PC-9 (cell line): ENCODE measurements at regions of chr7 and their contacts with region 1.

Region 1: GRCh38 chr7:4681886-4682620 is at the start of gene FOXK1:
- DNase-seq: peak in 1 of 2 experiments; percentile 84
- H3K4me3 ChIP-seq: peak within 1 kb of the TSS; percentile 66
- H3K27ac ChIP-seq: peak within 1 kb of the TSS; percentile 85
- H3K4me1 ChIP-seq: peaks cover 21% of the 10 kb centered on the region
- H3K27me3 ChIP-seq: no peaks in the 10 kb centered on the region
- CTCF ChIP-seq: no peak
- total RNA-seq, gene FOXK1: 68.1 and 77.3 TPM in 2 replicates

Region 2: DNA sequence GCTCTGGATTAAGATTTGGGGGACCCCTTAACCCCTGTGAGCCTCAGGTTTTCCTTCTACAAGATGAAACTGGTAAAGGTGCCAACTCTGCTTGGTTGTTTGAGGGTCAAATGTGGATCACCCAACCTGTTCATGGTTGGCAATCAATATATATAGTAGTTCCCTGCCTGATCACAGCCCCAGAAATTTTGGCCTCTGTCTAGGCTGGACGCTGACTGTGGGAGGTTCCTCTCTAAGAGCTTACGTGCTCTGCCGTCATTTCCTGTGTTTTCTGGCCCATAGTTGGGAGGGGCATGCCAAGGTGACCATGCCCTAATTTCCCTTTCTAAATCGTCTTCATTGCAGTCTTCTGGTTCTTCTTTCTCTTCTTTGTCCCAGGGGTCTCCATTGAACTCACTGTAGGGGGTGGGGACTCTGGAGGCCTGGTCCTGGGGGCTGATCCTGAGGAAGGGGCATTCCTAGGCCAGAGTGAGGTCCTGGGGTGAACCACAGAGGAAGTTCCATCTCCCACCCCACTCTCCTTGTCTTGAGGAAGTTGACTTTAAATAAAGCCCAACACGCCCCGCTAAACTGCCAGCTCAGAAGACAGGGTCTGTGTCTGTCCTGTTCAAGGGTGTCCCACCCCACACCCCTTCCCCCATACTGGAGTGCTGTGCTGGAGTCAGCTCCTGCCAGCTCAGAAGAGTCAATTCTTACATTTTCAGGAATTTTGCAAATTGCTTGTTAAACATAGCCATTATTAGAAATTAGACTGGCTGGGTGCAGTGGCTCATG is 1479.9 kb before region 1 on chr7:
- CTCF ChIA-PET with region 1: interaction called, 14 read pairs
- POLR2A ChIA-PET with region 1: no interaction called
- intact Hi-C with region 1: no loop called
- DNase-seq: no peak
- H3K4me3 ChIP-seq: no peak overlapping the region
- H3K27ac ChIP-seq: no peak overlapping the region
- H3K4me1 ChIP-seq: 0 out of 2 replicates have a peak, but pooled peaks cover 5% of the 10 kb centered on the region
- H3K27me3 ChIP-seq: no peaks in the 10 kb centered on the region
- CTCF ChIP-seq: no peak

Region 3: GRCh38 chr7:4575254-4575653 is 106.8 kb before region 1 on chr7:
- CTCF ChIA-PET with region 1: no interaction called
- POLR2A ChIA-PET with region 1: no interaction called
- intact Hi-C with region 1: no loop called
- DNase-seq: no peak
- H3K4me3 ChIP-seq: no peak overlapping the region
- H3K27ac ChIP-seq: no peak overlapping the region
- H3K4me1 ChIP-seq: no peaks in the 10 kb centered on the region
- H3K27me3 ChIP-seq: peaks cover 34% of the 10 kb centered on the region
- CTCF ChIP-seq: no peak

Region 4: GRCh38 chr7:4641667-4642467 is 40.2 kb before region 1 on chr7:
- CTCF ChIA-PET with region 1: no interaction called
- POLR2A ChIA-PET with region 1: no interaction called
- intact Hi-C with region 1: loop called (anchors 1 kb)
- DNase-seq: peak; percentile 84 to 99
- H3K4me3 ChIP-seq: peak overlapping the region; percentile 69
- H3K27ac ChIP-seq: peak overlapping the region; percentile 92
- H3K4me1 ChIP-seq: peaks cover 6% of the 10 kb centered on the region
- H3K27me3 ChIP-seq: no peaks in the 10 kb centered on the region
- CTCF ChIP-seq: no peak; the same call in 1 of the 2 replicates

Region 5: DNA sequence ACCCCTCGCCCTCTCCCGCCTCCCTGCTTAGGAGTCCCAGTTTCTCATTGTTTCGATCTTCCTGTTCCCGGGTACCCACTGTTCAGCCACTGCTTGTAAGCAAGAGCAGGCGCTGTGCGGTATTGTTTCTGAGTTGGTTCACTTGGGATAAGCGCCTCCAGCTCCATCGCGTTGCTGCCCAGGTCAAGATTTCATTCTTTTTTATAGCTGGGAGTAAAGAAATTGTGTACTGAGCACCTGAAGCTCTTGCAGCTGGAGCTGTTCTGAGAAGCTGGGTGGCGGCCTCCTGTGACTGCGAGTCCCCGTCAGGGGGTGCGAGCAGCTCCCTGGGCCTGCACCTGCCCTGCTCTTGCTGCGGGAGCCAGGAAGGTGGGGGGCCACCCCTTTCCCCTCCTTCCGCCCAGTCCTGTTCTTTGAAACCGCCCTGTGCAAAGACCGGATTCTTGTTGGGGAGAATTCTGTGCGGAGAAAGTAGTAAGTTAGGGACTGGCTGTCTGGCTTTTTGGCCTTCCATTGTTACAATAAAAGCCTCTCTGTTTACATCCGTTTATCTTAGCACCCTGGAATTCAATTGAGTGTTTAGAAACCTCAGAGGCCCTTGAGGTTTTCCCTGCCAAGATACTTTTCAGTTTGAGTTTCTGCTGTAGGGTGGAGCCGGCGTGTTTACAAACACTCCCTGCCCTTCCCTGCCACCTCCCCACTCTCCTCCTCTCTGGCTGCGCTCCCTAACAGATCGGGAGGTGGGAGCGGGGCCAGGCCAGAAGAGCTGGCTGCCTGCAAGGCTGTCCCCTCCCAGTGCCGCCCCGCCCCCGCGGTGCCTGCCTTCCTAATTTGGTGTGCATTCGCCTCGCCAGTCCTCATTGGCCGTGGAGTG is 62.6 kb after region 1 on chr7:
- CTCF ChIA-PET with region 1: no interaction called
- POLR2A ChIA-PET with region 1: interaction called, 8 read pairs
- intact Hi-C with region 1: loop called (anchors 1 kb)
- DNase-seq: peak; percentile 98 to 100
- H3K4me3 ChIP-seq: peak overlapping the region; percentile 30; the same call in 1 of the 2 replicates
- H3K27ac ChIP-seq: peak overlapping the region; percentile 93
- H3K4me1 ChIP-seq: peaks cover 37% of the 10 kb centered on the region
- H3K27me3 ChIP-seq: no peaks in the 10 kb centered on the region
- CTCF ChIP-seq: no peak

Region 6: DNA sequence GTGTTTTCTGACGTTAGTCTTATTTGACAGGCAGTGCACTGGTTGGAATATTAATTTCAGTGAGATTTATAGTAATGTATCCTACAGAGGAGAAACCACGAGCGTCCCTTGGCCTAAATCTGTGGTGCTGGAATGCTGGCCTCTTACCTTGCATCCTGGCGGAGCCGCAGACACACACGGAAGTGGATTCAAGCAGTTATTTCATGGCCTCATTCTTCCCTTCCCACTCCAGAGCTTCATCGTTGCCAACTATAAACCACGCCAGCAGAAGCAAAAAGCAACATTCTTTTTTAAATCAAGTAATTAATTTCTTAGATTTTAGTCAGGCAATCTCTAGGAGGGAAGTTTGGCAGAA is 521.1 kb after region 1 on chr7:
- CTCF ChIA-PET with region 1: interaction called, 12 read pairs
- POLR2A ChIA-PET with region 1: no interaction called
- intact Hi-C with region 1: no loop called
- DNase-seq: no peak
- H3K4me3 ChIP-seq: no peak overlapping the region
- H3K27ac ChIP-seq: no peak overlapping the region
- H3K4me1 ChIP-seq: no peaks in the 10 kb centered on the region
- H3K27me3 ChIP-seq: no peaks in the 10 kb centered on the region
- CTCF ChIP-seq: no peak